PC-3 (cell line): ENCODE measurements at regions of chr22 and their contacts with region 1.

Region 1: GRCh38 chr22:24310969-24311368 is 40.3 kb downstream of the SPECC1L start:
- DNase-seq: peak; percentile 74
- ATAC-seq: peak; percentile 94
- H3K4me3 ChIP-seq: no peak overlapping the region
- H3K27ac ChIP-seq: peak overlapping the region; percentile 55; the same call in 1 of the 2 replicates
- H3K4me1 ChIP-seq: peaks cover 9% of the 10 kb centered on the region; the same call in 1 of the 2 replicates
- H3K27me3 ChIP-seq: no peaks in the 10 kb centered on the region
- CTCF ChIP-seq: no peak

Region 2: DNA sequence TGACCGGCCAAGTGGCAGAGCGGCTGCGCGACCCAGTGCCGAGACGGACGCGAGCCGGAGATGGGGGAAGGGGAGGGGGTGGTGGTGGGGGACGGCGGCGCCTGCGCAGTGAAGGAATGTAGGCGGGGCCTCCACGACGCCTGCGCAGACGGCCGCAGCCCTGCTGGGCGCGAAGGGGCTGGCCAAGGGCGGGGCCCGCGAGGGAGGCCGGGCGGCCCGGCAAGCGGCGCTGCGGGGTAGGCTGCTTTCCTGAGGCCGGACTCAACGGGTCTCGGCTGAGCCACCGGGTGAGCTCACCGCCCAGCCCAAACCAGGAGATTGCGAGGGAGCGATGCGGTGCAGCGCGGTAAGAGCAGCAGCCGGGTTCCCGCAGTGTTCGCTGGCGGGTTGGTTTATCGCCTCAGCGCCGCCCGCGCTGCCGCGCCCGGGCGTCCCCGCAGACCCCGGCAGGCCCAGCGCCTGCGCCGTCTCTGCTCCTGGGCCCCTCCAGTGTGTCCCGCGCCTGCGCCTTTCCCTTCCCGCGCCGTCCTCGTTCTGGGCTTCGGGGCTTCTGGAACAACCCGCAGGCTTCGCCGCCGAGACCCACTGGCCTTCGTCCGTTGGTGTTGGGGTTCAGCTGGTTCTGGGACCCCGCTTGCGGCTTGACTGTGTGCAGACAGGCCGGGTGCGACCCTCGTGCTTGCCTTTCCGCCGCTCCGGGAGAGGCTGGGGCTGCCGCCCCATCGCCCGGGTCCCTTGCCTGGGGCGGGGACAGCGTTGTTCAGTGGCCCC is 40.1 kb before region 1 on chr22 and contains the start of gene SPECC1L:
- CTCF ChIA-PET with region 1: no interaction called
- POLR2A ChIA-PET with region 1: no interaction called
- intact Hi-C with region 1: loop called (anchors 5 kb)
- DNase-seq: peak; percentile 90
- ATAC-seq: peak; percentile 89
- H3K4me3 ChIP-seq: peak within 1 kb of the TSS; percentile 88
- H3K27ac ChIP-seq: peak within 1 kb of the TSS; percentile 57
- H3K4me1 ChIP-seq: peaks cover 8% of the 10 kb centered on the region; the same call in 1 of the 2 replicates
- H3K27me3 ChIP-seq: no peaks in the 10 kb centered on the region
- CTCF ChIP-seq: no peak
- total RNA-seq, gene SPECC1L: 14.1 and 15.1 TPM in 2 replicates